ENCODE measurements at regions of chr19 and their contacts with region 1.

Region 1: GRCh38 chr19:46221981-46222610 is 7.4 kb upstream of the IGFL1 start:
- DNase-seq: peak; percentile 98
- H3K4me3 Mint-ChIP-seq: peak overlapping the region; percentile 47
- H3K27ac Mint-ChIP-seq: peak overlapping the region; percentile 51
- H3K4me1 Mint-ChIP-seq: peaks cover 33% of the 10 kb centered on the region
- H3K27me3 Mint-ChIP-seq: peaks cover 24% of the 10 kb centered on the region
- CTCF ChIP-seq: no peak

Region 2: GRCh38 chr19:46206158-46206557 is 15.9 kb before region 1 on chr19:
- CTCF ChIA-PET with region 1: interaction called, 4 read pairs
- POLR2A ChIA-PET with region 1: interaction called, 57 read pairs
- intact Hi-C with region 1: no loop called
- DNase-seq: peak; percentile 96
- H3K4me3 Mint-ChIP-seq: no peak overlapping the region
- H3K27ac Mint-ChIP-seq: peak overlapping the region; percentile 40
- H3K4me1 Mint-ChIP-seq: peaks cover 55% of the 10 kb centered on the region
- H3K27me3 Mint-ChIP-seq: no peaks in the 10 kb centered on the region
- CTCF ChIP-seq: no peak

Region 3: DNA sequence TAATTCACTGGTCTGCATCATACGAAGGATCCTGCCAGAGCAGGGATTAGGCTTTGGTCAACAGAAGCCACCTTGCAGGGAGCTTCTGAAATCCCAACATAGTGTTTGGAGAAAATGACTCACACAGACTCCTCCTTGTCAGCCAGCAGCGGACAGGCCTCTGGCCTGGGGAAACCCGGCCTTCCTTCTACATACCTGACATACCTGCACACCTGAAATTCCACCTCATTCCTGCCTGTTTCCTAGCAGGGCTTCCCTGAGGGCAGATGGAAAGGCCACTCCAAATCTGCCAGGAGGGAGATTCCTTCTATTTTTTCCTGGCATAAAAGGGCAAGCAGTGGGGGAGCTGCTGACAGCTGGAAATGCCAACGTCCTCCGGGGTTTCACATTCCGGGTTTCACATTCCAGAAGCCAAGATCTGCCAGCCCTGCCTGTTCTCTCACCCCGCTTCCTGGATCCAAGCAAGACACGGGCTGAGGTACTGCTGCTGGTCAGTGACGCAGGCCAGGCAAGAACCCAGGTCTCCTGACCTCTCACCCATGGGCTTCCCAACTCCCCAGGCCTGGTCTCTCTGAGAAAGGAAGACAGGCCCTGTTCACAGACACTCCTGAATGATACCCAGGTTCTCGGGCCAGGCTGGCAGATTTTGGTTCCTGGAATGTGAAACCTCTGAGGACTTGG is 10.8 kb before region 1 on chr19:
- CTCF ChIA-PET with region 1: interaction called, 4 read pairs
- POLR2A ChIA-PET with region 1: interaction called, 57 read pairs
- intact Hi-C with region 1: no loop called
- DNase-seq: peak; percentile 89
- H3K4me3 Mint-ChIP-seq: peak overlapping the region; percentile 19
- H3K27ac Mint-ChIP-seq: peak overlapping the region; percentile 89
- H3K4me1 Mint-ChIP-seq: peaks cover 37% of the 10 kb centered on the region
- H3K27me3 Mint-ChIP-seq: peaks cover 5% of the 10 kb centered on the region
- CTCF ChIP-seq: no peak

Region 4: DNA sequence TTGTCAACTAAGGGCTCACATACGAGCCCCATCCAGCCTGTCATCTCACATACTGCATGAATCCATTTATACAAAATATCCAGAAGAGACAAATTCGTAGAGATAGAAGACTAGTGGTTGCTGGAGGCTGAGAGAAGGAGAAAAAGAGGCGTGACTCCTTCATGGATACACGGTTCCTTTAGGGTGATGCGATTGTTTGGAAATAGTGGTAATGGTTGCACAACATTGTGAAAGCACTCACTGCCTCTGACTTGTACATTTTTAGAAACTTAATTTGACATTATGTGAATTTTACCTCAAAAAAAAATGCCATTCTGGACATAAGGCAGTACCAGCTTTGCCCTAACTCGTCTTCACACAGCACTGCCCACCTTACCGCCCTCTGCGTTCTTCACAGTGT is 34.8 kb after region 1 on chr19:
- CTCF ChIA-PET with region 1: no interaction called
- POLR2A ChIA-PET with region 1: interaction called, 4 read pairs
- intact Hi-C with region 1: loop called (anchors 1 kb)
- DNase-seq: peak; percentile 62
- H3K4me3 Mint-ChIP-seq: no peak overlapping the region
- H3K27ac Mint-ChIP-seq: no peak overlapping the region
- H3K4me1 Mint-ChIP-seq: peaks cover 16% of the 10 kb centered on the region
- H3K27me3 Mint-ChIP-seq: peaks cover 1% of the 10 kb centered on the region
- CTCF ChIP-seq: no peak

Region 5: GRCh38 chr19:46413262-46414031 is 191.4 kb after region 1 on chr19 and contains the start of gene CCDC8:
- CTCF ChIA-PET with region 1: no interaction called
- POLR2A ChIA-PET with region 1: no interaction called
- intact Hi-C with region 1: no loop called
- DNase-seq: no peak
- H3K4me3 Mint-ChIP-seq: no peak within 1 kb of the TSS
- H3K27ac Mint-ChIP-seq: no peak within 1 kb of the TSS
- H3K4me1 Mint-ChIP-seq: peaks cover 5% of the 10 kb centered on the region
- H3K27me3 Mint-ChIP-seq: no peaks in the 10 kb centered on the region
- CTCF ChIP-seq: no peak
- total RNA-seq, gene CCDC8: not detected in 2 replicates